Endothelial cell of umbilical vein (primary cell): ENCODE measurements at regions of chr5 and their contacts with region 1.

Region 1: DNA sequence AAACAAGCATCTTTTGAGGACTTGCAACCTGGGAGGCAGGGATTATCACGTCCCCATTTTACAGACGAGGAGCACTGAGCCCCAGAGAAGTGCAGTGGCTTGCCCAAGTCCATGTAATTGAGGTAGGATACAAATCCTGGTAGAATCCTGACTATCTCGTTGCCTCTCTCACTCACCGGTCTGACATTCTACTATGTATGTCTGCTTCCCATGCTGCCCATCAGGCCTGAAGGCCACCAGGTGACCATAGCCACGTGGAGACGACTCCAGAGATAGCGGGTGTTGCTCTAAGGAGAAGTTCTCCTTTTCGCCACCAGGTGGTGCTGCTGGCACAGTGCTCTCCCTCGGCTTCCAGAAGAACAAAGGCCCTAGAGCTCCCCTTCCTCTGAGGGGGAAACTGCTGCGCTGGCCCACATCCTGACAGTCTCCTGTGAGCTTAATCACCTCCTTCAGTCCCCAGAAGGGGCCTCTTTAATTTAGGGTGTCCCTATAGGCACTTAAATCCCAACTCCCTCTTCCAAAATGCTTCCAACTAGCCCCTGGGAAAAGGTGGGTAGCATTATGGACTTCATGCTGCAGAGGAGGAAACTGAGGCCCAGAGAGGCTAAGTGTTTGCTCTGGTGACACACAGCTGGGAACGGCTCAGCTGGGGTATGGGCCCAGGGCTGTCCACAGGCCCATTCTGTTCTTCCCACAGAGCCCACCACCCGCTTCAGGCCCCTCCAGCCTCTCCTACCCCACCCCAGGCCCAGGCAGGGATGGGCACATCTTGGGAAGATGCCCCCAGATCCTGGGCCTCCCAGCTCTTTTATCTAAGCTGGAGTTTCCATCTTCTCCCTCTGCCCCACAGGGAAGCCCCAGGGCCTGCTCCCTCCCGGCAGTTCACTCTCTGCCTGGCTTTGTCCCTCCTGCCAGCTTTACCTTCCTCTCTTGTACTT is 6.4 kb downstream of the SLC34A1 start:
- DNase-seq: peak; percentile 88
- H3K4me3 ChIP-seq: no peak overlapping the region
- H3K27ac ChIP-seq: no peak overlapping the region
- H3K4me1 ChIP-seq: no peaks in the 10 kb centered on the region
- H3K27me3 ChIP-seq: no peaks in the 10 kb centered on the region
- CTCF ChIP-seq: peak; percentile 90 to 92
- POLR2A ChIP-seq: no peak

Region 2: DNA sequence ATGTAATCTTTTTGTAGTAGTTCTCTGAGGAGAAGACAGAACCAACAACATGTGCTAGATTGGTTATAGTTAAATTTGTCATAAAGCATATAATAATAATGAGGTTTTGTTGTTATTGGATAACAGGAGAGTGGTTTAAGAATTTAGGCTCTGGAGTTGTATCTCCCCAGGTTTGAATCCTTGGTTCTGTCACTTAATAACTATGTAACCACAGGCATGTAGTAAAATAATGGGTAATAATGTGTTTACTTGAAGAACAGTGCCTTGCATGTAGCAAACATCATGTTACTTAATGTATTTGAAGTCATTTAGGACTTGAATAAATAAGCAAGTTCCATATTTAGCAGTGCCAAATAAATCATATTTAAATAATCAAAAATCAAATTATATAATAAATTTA is 201.2 kb before region 1 on chr5:
- CTCF ChIA-PET with region 1: no interaction called
- POLR2A ChIA-PET with region 1: no interaction called
- dilution Hi-C with region 1: no loop called
- intact Hi-C with region 1: no loop called
- DNase-seq: no peak
- H3K4me3 ChIP-seq: no peak overlapping the region
- H3K27ac ChIP-seq: no peak overlapping the region
- H3K4me1 ChIP-seq: peaks cover 8% of the 10 kb centered on the region
- H3K27me3 ChIP-seq: no peaks in the 10 kb centered on the region
- CTCF ChIP-seq: no peak
- POLR2A ChIP-seq: no peak

Region 3: DNA sequence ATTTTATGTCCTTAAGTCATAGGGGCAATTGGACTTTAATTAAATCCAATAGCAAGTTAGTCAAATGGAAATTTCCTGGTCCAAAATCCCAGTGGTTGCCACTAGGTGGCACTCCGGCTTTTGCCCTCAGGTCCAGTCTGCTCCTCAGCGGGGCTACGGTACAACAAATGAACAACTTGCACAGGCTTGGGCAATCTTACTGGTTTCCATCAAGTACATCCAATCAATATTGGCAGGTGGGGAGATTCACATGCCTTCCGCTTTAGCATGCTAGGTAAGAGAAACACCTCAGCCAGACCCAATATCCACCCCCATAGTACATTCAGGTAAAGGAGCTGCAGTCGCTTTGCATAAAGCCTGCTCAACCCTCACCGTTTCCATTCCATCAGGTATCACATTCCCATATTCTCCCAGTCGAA is 72.7 kb before region 1 on chr5:
- CTCF ChIA-PET with region 1: interaction called, 22 read pairs
- POLR2A ChIA-PET with region 1: no interaction called
- dilution Hi-C with region 1: no loop called
- intact Hi-C with region 1: no loop called
- DNase-seq: peak; percentile 82
- H3K4me3 ChIP-seq: no peak overlapping the region
- H3K27ac ChIP-seq: no peak overlapping the region
- H3K4me1 ChIP-seq: peaks cover under 1% of the 10 kb centered on the region
- H3K27me3 ChIP-seq: no peaks in the 10 kb centered on the region
- CTCF ChIP-seq: peak; percentile 83 to 93
- POLR2A ChIP-seq: no peak

Region 4: DNA sequence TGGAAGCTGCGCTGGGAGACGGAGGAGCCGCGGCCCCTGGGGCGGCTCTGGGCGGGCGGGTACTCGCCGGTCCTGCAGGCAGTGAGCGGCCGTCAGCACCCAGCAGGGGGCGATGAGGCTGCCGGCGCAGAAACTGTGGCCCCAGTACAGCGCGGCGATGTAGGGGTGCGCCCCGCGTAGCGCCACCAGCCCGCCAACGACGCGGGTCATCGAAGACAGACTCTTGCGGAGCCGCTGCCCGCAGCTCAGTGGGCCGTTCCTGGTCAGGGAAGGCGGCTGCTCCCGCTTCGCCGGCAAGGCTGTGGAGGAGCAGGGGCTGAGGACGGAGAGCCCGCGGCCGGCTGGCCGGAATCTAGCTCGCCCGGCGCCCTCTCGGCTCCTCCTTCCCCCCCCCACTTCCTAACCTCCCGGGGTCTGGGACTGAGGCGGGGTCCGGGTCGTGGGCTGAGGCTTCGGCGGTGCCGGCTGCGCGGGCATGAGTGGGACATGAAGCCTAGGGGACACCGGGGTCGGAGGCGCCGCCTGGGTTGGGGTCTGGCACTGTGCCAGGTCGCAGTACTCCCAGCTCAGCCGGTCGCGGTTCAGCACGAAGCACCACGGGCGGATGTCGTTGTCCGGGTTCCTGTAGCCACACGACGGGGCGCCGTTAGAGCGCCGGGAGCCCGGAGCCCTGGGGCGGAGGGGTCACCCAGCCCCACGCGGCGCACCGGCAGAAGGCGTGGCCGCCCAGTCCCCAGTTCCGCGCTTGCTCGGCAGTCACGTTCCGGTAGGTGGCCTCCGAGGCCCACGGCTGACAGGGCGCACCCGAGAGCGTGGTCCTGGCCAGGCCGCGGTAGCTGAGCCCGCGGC is 13.4 kb after region 1 on chr5:
- CTCF ChIA-PET with region 1: interaction called, 138 read pairs
- POLR2A ChIA-PET with region 1: no interaction called
- dilution Hi-C with region 1: no loop called
- intact Hi-C with region 1: no loop called
- DNase-seq: peak; percentile 73
- H3K4me3 ChIP-seq: peak overlapping the region; percentile 27 to 42 (median 34)
- H3K27ac ChIP-seq: no peak overlapping the region
- H3K4me1 ChIP-seq: peaks cover 23% of the 10 kb centered on the region
- H3K27me3 ChIP-seq: peaks cover 34 to 39% of the 10 kb centered on the region in 2 experiments
- CTCF ChIP-seq: peak; percentile 81 to 87
- POLR2A ChIP-seq: peak; percentile 41

Region 5: DNA sequence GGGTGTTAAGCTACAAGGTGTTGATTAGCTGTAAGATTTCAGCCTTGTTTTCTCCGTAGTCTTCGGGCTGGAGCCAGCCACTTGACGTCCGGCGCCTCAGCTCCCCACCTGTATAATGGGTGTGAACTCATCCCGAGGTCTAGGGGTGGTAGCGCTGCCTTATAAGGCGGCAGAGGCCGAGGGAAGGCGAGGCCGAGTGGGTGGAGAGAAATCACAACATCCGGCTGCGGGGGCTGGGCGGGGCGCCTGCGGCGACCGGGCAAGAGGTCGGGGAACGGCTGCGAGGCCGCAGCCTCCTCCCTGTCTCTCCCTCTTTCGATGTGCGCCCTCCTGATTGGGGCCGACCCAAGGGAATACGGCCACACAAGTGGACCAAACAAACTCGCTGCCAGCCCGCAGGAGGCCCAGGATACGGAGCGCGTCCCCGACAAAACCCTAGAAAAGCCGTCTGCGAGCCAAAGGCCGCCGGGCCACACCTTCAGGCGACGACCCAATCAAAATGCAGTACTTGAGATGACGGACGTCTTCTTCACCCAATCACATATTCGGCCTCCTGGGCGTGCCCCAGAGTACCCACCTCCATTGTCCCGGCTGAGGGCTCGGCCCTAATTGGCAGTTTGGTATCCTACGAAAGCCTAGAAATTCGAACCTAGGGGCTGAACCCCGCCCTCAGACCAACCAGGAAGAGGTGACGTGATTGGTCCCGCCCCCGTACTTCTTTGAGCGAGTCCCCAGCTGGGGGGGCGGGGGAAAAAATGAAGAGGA is 35.4 kb after region 1 on chr5:
- CTCF ChIA-PET with region 1: interaction called, 15 read pairs
- POLR2A ChIA-PET with region 1: no interaction called
- dilution Hi-C with region 1: no loop called
- intact Hi-C with region 1: loop called (anchors 1 kb)
- DNase-seq: peak; percentile 100
- H3K4me3 ChIP-seq: peak overlapping the region; percentile 40 to 52 (median 51)
- H3K27ac ChIP-seq: peak overlapping the region; percentile 61
- H3K4me1 ChIP-seq: peaks cover 14% of the 10 kb centered on the region
- H3K27me3 ChIP-seq: no peaks in the 10 kb centered on the region
- CTCF ChIP-seq: no peak
- POLR2A ChIP-seq: peak; percentile 56